ENCODE measurements at regions of chr2 and their contacts with region 1.

Region 1: DNA sequence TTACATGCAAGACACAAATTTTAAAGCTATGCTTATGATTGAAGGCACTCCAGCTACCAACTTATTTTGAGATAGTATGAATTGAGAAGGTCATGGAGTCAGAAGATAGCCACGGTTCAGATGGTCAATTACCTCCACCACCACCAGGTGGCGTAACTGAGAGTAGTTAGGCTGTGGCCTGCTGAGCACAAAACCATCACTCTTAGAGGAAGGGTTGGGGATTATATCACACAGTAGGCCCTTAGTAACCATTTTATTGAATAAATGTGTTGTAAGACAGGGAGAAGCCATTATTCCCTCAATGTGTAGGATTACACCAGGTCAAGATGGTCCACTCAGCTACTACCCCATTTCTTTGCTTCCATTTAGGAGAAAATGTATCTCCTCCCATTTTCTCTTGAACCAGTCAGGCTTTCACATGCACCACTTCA is 18.8 kb downstream of the KLHL41 start:
- DNase-seq: peak; percentile 81
- H3K4me3 ChIP-seq: no peak overlapping the region
- H3K27ac ChIP-seq: no peak overlapping the region
- H3K4me1 ChIP-seq: no peaks in the 10 kb centered on the region
- H3K27me3 ChIP-seq: no peaks in the 10 kb centered on the region
- CTCF ChIP-seq: peak; percentile 46 to 86 (median 75)
- POLR2A ChIP-seq: no peak

Region 2: GRCh38 chr2:169928463-169928864 is 400.2 kb after region 1 on chr2:
- intact Hi-C with region 1: loop called (anchors 10 kb)
- DNase-seq: no peak
- H3K4me3 ChIP-seq: no peak overlapping the region
- H3K27ac ChIP-seq: no peak overlapping the region
- H3K4me1 ChIP-seq: no peaks in the 10 kb centered on the region
- H3K27me3 ChIP-seq: no peaks in the 10 kb centered on the region
- CTCF ChIP-seq: peak in 10 of 11 experiments; percentile 26 to 76 (median 68)
- POLR2A ChIP-seq: no peak

Measured in spleen (tissue), 13 donors.